ENCODE measurements at regions of chr10 and their contacts with region 1.

Region 1: DNA sequence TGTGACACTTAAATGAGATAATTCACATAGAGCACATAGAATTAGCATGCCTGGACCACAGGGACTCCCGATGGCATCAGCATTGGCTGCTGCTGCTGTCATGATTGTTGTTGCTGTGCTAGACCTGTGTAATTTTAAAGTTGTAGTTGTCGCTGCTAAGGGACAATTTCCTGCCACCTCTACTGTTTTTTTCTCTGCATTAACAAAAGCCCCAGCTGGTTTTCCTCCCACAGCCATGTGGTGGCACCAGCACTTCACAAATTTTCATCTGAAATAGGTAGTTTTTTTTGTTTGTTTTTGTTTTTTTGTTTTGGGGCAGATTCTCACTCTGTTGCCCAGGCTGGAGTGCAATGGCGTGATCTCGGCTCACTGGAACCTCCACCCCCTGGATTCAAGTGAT is 25.4 kb upstream of the PRXL2A start:
- DNase-seq: peak; percentile 57
- H3K4me3 Mint-ChIP-seq: no peak overlapping the region
- H3K27ac Mint-ChIP-seq: no peak overlapping the region
- H3K4me1 Mint-ChIP-seq: peaks cover 5% of the 10 kb centered on the region
- H3K27me3 Mint-ChIP-seq: no peaks in the 10 kb centered on the region
- CTCF ChIP-seq: peak; percentile 75

Region 2: DNA sequence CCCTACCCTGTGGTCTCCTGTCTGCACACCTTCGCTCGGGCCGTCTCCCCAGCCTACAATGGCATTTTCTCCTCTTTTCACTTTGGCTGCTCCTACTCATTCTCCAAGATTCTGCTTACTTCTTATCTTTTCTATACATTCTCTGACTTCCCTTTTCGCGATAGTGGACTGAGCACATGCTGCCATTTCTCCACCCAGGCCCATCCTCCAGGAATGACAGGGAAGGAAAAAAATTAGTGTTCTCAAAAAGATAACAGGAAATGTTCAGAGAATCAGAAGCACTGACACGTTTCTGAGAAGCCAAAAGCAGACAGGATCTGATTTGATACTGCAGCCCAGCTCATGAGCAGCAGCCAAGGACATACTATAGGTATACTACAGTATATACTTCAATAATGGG is 171.2 kb before region 1 on chr10:
- CTCF ChIA-PET with region 1: no interaction called
- POLR2A ChIA-PET with region 1: no interaction called
- intact Hi-C with region 1: no loop called
- DNase-seq: no peak
- H3K4me3 Mint-ChIP-seq: no peak overlapping the region
- H3K27ac Mint-ChIP-seq: no peak overlapping the region
- H3K4me1 Mint-ChIP-seq: no peaks in the 10 kb centered on the region
- H3K27me3 Mint-ChIP-seq: no peaks in the 10 kb centered on the region
- CTCF ChIP-seq: no peak

Region 3: GRCh38 chr10:80453701-80454513 is 70.9 kb after region 1 on chr10 and contains the start of gene TSPAN14:
- CTCF ChIA-PET with region 1: interaction called, 12 read pairs
- POLR2A ChIA-PET with region 1: interaction called, 3 read pairs
- intact Hi-C with region 1: no loop called
- DNase-seq: peak; percentile 71
- H3K4me3 Mint-ChIP-seq: peak within 1 kb of the TSS; percentile 79
- H3K27ac Mint-ChIP-seq: peak within 1 kb of the TSS; percentile 32
- H3K4me1 Mint-ChIP-seq: peaks cover 20% of the 10 kb centered on the region
- H3K27me3 Mint-ChIP-seq: no peaks in the 10 kb centered on the region
- CTCF ChIP-seq: no peak
- total RNA-seq, gene TSPAN14: 46.9 and 53.7 TPM in 2 replicates

Region 4: DNA sequence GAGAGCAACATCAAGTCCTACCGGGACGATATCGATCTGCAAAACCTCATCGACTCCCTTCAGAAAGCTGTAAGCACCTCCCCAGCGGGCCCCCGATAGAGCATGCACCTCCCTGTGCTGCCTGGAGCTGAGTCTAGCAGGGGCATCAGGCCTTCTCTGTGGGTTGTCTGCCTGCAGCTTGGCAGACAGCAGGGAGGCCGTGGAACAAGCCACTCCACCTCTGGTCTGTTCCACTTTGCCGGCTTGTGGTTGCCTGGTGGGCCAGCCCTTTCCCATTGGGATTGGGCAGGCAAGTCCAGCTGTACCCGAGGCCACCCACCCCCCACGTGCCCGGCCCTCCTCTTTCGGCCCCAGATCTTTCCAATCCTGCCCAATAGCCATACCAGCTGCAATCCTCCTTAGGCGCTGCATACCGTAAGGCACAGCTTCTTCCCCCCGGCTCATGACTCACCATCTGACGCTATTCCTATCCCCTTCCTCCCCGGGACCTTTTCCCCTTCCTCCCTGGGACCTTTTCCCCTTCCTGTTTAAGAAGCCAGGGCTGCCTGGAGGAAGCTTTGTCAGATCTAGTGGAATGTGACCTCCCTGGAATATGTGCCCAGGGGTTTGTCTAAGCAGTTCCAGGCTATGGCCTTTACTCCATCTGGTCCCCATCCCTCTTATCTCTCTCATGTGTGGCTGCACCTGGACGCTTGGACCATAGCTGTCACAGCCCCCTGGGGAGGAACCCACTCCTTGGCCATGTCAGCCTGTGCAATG is 126.6 kb after region 1 on chr10:
- CTCF ChIA-PET with region 1: interaction called, 22 read pairs
- POLR2A ChIA-PET with region 1: interaction called, 6 read pairs
- intact Hi-C with region 1: loop called (anchors 1 kb)
- DNase-seq: peak; percentile 81
- H3K4me3 Mint-ChIP-seq: no peak overlapping the region
- H3K27ac Mint-ChIP-seq: peak overlapping the region; percentile 31
- H3K4me1 Mint-ChIP-seq: peaks cover 37% of the 10 kb centered on the region
- H3K27me3 Mint-ChIP-seq: no peaks in the 10 kb centered on the region
- CTCF ChIP-seq: no peak

Region 5: GRCh38 chr10:80530251-80530650 is 147.3 kb after region 1 on chr10:
- CTCF ChIA-PET with region 1: no interaction called
- POLR2A ChIA-PET with region 1: no interaction called
- intact Hi-C with region 1: loop called (anchors 2 kb)
- DNase-seq: peak; percentile 72
- H3K4me3 Mint-ChIP-seq: no peak overlapping the region
- H3K27ac Mint-ChIP-seq: no peak overlapping the region
- H3K4me1 Mint-ChIP-seq: no peaks in the 10 kb centered on the region
- H3K27me3 Mint-ChIP-seq: no peaks in the 10 kb centered on the region
- CTCF ChIP-seq: no peak

Region 6: DNA sequence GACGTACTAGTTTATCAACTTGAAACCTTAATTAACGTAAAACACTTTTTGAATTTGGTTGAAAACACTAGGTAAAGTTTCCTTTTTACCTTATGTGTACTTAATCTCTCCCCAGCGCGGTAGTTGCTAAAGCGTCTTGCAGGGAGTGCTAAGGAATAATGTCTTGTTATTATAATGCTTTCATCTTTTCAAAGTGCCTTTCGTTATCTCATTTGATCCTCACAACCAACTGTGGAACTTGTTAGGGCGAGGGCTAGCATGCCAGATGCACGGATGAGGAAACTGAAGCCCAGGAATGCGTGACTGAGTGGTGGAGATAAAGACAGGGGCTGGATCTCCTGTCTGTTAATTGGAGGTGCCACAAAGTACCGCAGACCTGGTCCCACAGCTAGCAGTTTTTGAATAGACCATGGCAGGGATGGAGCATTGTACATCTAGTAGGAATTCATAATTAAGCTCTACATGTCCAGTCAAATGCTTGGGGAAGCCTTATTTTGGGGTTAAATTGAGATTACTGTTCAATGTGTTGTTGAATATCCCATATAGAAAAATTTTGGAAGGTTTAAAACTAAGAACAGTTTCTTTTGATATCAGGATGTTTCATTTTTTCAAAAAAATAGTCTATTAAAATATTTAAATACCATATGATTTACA is 389.0 kb after region 1 on chr10:
- CTCF ChIA-PET with region 1: no interaction called
- POLR2A ChIA-PET with region 1: no interaction called
- intact Hi-C with region 1: no loop called
- DNase-seq: no peak
- H3K4me3 Mint-ChIP-seq: no peak overlapping the region
- H3K27ac Mint-ChIP-seq: no peak overlapping the region
- H3K4me1 Mint-ChIP-seq: no peaks in the 10 kb centered on the region
- H3K27me3 Mint-ChIP-seq: peaks cover 81% of the 10 kb centered on the region
- CTCF ChIP-seq: no peak

Region 7: DNA sequence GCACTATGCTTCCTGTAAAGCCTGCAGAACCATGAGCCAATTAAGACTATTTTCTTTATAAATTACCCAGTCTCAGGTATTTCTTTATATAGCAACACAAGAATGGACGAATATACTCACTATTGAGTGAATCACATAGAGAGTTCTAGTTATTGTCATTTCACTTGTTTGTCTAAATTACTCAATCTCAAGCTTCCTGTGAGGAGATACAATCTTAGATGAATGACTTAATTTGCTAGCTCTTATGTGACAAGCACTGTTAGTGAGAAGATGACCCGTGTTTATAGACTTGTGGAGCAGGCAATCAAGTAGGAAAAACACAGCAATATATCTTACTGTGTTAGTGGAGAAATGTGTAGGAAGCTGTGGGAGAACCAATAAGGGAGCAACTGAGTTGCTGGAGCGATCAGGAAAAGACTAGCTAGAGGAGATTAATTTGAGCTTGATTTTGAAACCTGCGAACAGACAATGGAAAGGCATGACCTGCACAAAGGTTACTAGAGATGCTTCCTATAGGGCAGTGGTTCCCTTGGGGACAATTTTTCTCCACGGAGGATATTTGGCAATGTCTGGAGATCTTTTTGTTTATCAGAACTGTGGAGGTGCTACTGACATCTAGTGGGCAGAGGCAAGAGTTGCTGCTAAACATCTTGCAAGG is 635.8 kb after region 1 on chr10:
- CTCF ChIA-PET with region 1: interaction called, 4 read pairs
- POLR2A ChIA-PET with region 1: no interaction called
- intact Hi-C with region 1: loop called (anchors 5 kb)
- DNase-seq: peak; percentile 64
- H3K4me3 Mint-ChIP-seq: no peak overlapping the region
- H3K27ac Mint-ChIP-seq: no peak overlapping the region
- H3K4me1 Mint-ChIP-seq: peaks cover 7% of the 10 kb centered on the region
- H3K27me3 Mint-ChIP-seq: peaks cover 29% of the 10 kb centered on the region
- CTCF ChIP-seq: peak; percentile 77